K562 (cell line): ENCODE measurements at regions of chr18 and their contacts with region 1.

Region 1: GRCh38 chr18:68660354-68661183 is 54.3 kb downstream of the TMX3 start:
- DNase-seq: peak; percentile 8 to 33 (median 8)
- ATAC-seq: no peak
- H3K4me3 ChIP-seq: no peak overlapping the region
- H3K27ac ChIP-seq: no peak overlapping the region
- H3K4me1 ChIP-seq: no peaks in the 10 kb centered on the region
- H3K27me3 ChIP-seq: no peaks in the 10 kb centered on the region
- CTCF ChIP-seq: peak; percentile 16 to 51 (median 18); a peak in 3 of 6 replicates
- EP300 ChIP-seq: no peak
- POLR2A ChIP-seq: no peak
- RAD21 ChIP-seq: peak; percentile 17 to 44; a peak in 2 of 4 replicates

Region 2: DNA sequence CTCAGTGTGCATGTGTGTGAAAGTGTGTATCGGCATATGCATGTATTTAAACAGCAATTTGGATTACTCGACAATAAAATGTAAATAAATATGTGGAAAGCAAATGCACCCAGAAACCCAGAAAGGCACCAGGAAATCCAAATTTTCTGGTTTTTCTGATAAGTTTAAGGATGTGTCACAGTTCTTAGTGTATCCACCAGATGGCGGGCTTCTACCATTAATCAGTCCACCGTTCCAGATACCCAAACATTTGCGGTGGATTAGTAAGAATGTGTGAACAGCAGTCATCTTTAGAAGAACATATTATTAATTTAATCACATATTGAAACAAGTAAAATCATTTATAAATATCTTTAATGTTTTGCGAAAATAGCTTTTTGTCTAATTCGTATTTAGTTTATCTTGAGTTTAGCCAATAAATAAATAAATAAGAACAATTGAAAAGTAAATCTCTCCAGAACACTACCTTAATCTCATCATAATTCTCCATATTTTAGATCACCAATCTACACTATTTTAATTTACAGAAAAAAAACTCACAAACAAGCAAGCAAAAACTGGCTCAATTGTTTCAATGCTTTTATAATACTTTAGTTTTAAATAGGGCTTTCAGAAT is 1442.9 kb before region 1 on chr18:
- CTCF ChIA-PET with region 1: no interaction called
- POLR2A ChIA-PET with region 1: no interaction called
- in situ Hi-C with region 1: loop called (anchors 25 kb)
- intact Hi-C with region 1: loop called (anchors 5 kb)
- DNase-seq: peak; percentile 8 to 44 (median 26)
- ATAC-seq: peak; percentile 58; the same call in 1 of the 3 replicates
- H3K4me3 ChIP-seq: no peak overlapping the region
- H3K27ac ChIP-seq: no peak overlapping the region
- H3K4me1 ChIP-seq: no peaks in the 10 kb centered on the region
- H3K27me3 ChIP-seq: no peaks in the 10 kb centered on the region
- CTCF ChIP-seq: peak; percentile 40 to 60 (median 44); a peak in 5 of 6 replicates
- EP300 ChIP-seq: no peak
- POLR2A ChIP-seq: no peak
- RAD21 ChIP-seq: peak; percentile 78 to 80

Region 3: GRCh38 chr18:68735483-68736343 is 75.1 kb after region 1 on chr18:
- CTCF ChIA-PET with region 1: no interaction called
- POLR2A ChIA-PET with region 1: no interaction called
- in situ Hi-C with region 1: no loop called
- intact Hi-C with region 1: loop called (anchors 2 kb)
- DNase-seq: peak; percentile 14 to 31 (median 21)
- ATAC-seq: peak; percentile 53; the same call in 1 of the 3 replicates
- H3K4me3 ChIP-seq: no peak overlapping the region
- H3K27ac ChIP-seq: no peak overlapping the region
- H3K4me1 ChIP-seq: no peaks in the 10 kb centered on the region
- H3K27me3 ChIP-seq: no peaks in the 10 kb centered on the region
- CTCF ChIP-seq: peak; percentile 32 to 48 (median 47); a peak in 5 of 6 replicates
- EP300 ChIP-seq: no peak
- POLR2A ChIP-seq: no peak
- RAD21 ChIP-seq: peak; percentile 45 to 63

Region 4: DNA sequence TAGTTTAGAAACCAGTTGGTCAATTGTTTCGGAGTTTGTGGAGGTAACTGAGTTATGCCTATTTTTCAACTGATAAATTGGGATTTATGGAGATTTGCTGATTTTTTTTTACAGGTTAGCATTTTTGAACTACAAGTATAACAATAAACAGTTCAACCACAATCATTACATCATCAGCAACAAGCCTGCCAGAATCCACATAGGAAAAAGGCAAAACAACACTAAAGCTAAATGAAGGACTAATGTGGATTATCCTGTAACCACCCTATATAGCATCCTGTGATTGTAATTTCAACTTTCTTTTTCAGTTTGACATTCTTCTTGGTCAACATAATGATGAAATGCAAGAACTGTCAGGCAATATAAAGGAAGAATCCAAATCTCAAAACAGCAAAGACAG is 213.8 kb after region 1 on chr18:
- CTCF ChIA-PET with region 1: no interaction called
- POLR2A ChIA-PET with region 1: no interaction called
- in situ Hi-C with region 1: no loop called
- intact Hi-C with region 1: no loop called
- DNase-seq: no peak
- ATAC-seq: no peak
- H3K4me3 ChIP-seq: no peak overlapping the region
- H3K27ac ChIP-seq: no peak overlapping the region
- H3K4me1 ChIP-seq: no peaks in the 10 kb centered on the region
- H3K27me3 ChIP-seq: no peaks in the 10 kb centered on the region
- CTCF ChIP-seq: no peak
- EP300 ChIP-seq: no peak
- POLR2A ChIP-seq: no peak
- RAD21 ChIP-seq: no peak